ENCODE measurements at regions of chr9 and their contacts with region 1.

Region 1: DNA sequence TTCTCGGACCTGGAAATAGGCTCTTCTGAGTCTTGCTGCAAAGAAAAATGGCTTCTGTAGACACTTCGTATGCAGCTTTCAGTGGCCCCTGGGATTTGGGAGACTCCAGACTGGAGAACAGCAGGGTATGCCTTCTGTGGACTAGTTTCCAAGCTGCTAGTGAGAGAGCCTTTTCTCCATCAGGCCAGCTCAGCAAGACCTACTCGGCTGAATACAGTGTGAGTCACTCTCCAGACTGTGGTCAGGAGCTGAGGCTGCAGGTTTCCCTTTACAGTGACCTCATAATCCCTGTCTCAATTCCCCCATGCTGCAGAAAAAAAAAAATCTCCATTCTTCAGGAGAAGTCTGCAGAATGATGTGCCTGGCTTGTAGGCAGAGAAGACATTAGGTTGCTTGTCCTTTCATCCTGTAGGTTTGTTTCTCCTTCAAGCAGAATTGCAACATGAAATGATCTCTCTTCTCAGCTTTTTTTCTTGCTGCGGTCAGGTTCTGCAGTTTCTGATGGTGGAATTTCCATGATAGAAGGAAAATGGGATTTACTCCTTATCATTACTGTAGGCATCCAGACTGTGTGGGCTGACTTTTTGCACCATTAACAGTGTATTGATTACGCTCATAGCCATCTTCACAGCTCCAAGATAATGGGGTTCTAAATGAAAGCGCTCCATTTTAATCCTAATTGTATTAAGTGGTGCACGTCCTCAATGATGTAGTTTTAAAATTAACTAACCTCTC is 78.3 kb upstream of the TNFSF8 start:
- DNase-seq: peak; percentile 52
- H3K4me3 ChIP-seq: no peak overlapping the region
- H3K27me3 ChIP-seq: peaks cover 5% of the 10 kb centered on the region
- CTCF ChIP-seq: no peak

Region 2: GRCh38 chr9:114662081-114662989 is 346.4 kb before region 1 on chr9:
- CTCF ChIA-PET with region 1: interaction called, 11 read pairs
- POLR2A ChIA-PET with region 1: no interaction called
- DNase-seq: no peak
- H3K4me3 ChIP-seq: no peak overlapping the region
- H3K27me3 ChIP-seq: peaks cover 8% of the 10 kb centered on the region
- CTCF ChIP-seq: peak; percentile 89

Region 3: DNA sequence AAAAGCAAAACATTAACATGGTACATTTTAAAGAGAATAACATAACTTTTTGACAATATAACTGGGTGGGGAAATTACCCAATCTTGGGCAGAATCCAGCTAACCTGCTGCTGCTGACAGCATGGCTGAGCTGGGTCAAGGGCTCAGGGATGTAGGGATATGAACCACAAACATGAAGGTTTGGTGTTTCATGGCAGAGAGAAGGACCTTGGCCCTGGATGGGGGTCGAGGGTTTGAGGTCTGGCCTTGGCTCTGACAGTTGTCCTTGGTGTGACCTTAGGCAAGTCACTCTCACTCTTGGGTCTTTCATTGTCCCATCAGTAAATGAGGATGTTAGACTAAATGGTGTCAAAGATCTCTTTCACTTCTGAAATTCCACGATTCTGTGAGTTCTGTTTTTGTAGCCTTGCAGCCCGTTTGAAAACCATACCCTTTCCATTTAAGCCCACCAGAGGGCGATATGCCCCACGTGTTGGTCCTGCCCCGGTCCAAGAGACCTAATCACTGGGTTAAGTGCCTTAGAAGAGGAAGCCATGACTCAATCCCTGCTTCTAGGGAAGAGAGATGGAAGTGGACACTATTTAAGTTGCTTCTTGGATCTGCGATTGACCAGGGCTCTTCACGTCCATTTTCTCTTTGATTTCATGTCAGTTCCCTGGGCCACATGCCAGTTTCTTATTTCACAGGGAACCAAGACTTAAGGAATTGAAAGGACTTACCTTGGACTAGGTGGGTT is 270.0 kb before region 1 on chr9:
- CTCF ChIA-PET with region 1: interaction called, 11 read pairs
- POLR2A ChIA-PET with region 1: no interaction called
- DNase-seq: peak; percentile 34
- H3K4me3 ChIP-seq: no peak overlapping the region
- H3K27me3 ChIP-seq: no peaks in the 10 kb centered on the region; the same call in 1 of the 2 replicates
- CTCF ChIP-seq: peak; percentile 82